ENCODE measurements at regions of chr11 and their contacts with region 1.

Region 1: GRCh38 chr11:57778318-57779037 is 16.9 kb downstream of the CTNND1 start:
- DNase-seq: peak; percentile 93
- ATAC-seq: peak; percentile 92

Region 2: GRCh38 chr11:57761301-57762234 is 16.9 kb before region 1 on chr11 and contains the start of gene CTNND1:
- intact Hi-C with region 1: loop called (anchors 1 kb)
- DNase-seq: peak; percentile 84
- ATAC-seq: peak; percentile 98
- total RNA-seq, gene CTNND1: 67.0 TPM

Region 3: DNA sequence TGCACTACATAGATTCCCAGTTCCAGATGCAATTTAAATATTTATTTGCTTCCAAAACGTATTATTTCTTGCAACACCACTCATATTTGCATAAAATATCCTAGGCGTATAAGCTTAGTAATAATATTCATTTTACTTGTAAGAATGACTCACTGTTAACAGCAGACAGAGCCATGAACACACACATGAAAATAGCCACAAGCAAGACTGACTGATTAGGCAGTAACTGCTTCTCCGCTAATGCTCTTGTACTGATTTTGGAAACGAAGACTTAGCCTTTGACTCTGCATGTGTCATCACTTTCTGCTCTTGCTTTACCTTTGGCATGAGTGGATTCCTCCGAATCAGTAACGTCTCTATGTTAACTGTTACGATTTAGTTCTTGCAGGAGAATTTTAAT is 444.2 kb after region 1 on chr11:
- intact Hi-C with region 1: no loop called
- DNase-seq: no peak
- ATAC-seq: no peak

Measured in Right ventricle myocardium inferior (tissue), 1 donor.